Calu3 (cell line): ENCODE measurements at regions of chr2 and their contacts with region 1.

Region 1: GRCh38 chr2:84925724-84926376 is 20.4 kb downstream of the TMSB10 start:
- DNase-seq: peak; percentile 99
- H3K4me3 Mint-ChIP-seq: peak overlapping the region; percentile 63
- H3K27ac Mint-ChIP-seq: peak overlapping the region; percentile 30
- H3K4me1 Mint-ChIP-seq: peaks cover 36% of the 10 kb centered on the region
- H3K27me3 Mint-ChIP-seq: no peaks in the 10 kb centered on the region
- CTCF ChIP-seq: peak; percentile 93

Region 2: DNA sequence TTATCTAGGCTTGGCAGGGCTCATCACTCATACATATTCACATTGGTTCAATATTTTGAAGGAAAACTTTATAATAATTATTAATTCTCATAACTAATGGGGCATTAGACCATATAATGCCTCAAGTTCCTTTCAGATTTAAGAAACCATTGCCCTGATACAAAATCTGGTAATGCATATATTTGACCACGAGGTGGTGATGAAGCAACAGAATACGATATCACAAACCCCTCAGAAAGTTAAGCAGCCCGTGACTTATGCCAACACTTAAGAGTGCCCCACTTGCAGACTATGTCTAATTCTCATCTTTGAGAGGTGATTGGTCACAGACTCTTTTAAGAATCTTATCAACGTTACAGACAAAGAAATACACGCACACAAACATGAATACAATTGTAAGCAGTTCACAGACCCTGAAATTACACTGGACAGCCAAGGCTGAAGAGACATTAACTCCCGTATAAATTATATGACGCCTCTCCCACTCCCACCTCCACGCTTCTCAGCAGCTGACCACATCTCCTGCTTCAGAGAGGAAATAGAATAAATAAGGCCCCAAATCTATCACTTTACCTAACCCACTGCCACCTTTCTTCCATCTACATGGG is 430.2 kb before region 1 on chr2:
- CTCF ChIA-PET with region 1: interaction called, 3 read pairs
- intact Hi-C with region 1: loop called (anchors 5 kb)
- DNase-seq: peak; percentile 37
- H3K4me3 Mint-ChIP-seq: no peak overlapping the region
- H3K27ac Mint-ChIP-seq: no peak overlapping the region
- H3K4me1 Mint-ChIP-seq: peaks cover 13% of the 10 kb centered on the region
- H3K27me3 Mint-ChIP-seq: no peaks in the 10 kb centered on the region
- CTCF ChIP-seq: peak; percentile 65

Region 3: DNA sequence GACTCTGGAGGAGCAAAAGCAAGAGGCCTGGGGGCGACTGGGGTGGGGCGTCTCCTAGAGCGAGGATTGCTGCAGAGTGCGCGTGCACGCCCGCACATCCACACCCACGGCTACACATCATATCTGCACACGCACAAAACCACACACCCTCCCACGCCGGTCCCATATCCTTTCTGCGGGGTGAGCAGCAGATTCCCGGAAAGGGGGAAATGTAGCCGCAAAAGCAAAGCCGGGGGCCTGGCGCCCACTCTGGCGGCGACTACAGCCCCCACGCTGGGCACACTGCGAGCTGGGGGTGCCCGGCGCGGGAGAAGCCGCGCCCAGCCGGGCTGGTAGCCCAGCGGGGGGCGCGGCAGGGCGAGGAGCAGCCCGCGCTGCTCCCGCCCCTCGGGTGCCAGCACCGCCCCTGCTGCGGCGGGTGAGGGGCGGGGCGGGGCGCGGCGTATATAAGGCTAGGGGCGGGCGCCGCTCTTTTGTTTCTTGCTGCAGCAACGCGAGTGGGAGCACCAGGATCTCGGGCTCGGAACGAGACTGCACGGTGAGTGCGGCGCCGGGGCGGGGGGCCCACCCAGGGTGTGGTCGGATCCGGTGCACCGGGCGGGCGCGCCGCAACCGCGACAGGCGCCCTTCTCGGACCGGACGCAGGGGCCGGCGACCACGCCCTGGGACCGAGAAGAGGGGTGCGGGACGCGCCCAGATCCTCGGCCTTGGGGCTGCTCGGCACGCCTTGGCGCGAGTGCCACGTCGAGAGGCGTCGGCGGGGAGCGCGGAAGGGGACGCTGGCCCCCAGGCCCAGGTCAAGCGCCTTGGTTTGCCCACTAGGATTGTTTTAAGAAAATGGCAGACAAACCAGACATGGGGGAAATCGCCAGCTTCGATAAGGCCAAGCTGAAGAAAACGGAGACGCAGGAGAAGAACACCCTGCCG is 20.4 kb before region 1 on chr2 and contains the start of gene TMSB10:
- CTCF ChIA-PET with region 1: interaction called, 24 read pairs
- intact Hi-C with region 1: no loop called
- DNase-seq: peak; percentile 92
- H3K4me3 Mint-ChIP-seq: peak within 1 kb of the TSS; percentile 86
- H3K27ac Mint-ChIP-seq: peak within 1 kb of the TSS; percentile 98
- H3K4me1 Mint-ChIP-seq: peaks cover 31% of the 10 kb centered on the region
- H3K27me3 Mint-ChIP-seq: no peaks in the 10 kb centered on the region
- CTCF ChIP-seq: no peak
- total RNA-seq, gene TMSB10: 1,316 and 1,437 TPM in 2 replicates

Region 4: GRCh38 chr2:84958135-84959044 is 32.5 kb after region 1 on chr2:
- CTCF ChIA-PET with region 1: interaction called, 26 read pairs
- intact Hi-C with region 1: no loop called
- DNase-seq: peak; percentile 81
- H3K4me3 Mint-ChIP-seq: peak overlapping the region; percentile 55
- H3K27ac Mint-ChIP-seq: peak overlapping the region; percentile 95
- H3K4me1 Mint-ChIP-seq: peaks cover 40% of the 10 kb centered on the region
- H3K27me3 Mint-ChIP-seq: no peaks in the 10 kb centered on the region
- CTCF ChIP-seq: no peak

Region 5: GRCh38 chr2:84991404-84992151 is 65.7 kb after region 1 on chr2:
- CTCF ChIA-PET with region 1: no interaction called
- intact Hi-C with region 1: no loop called
- DNase-seq: no peak
- H3K4me3 Mint-ChIP-seq: no peak overlapping the region
- H3K27ac Mint-ChIP-seq: no peak overlapping the region
- H3K4me1 Mint-ChIP-seq: peaks cover 12% of the 10 kb centered on the region
- H3K27me3 Mint-ChIP-seq: no peaks in the 10 kb centered on the region
- CTCF ChIP-seq: no peak

Region 6: GRCh38 chr2:85017411-85018048 is 91.7 kb after region 1 on chr2:
- CTCF ChIA-PET with region 1: interaction called, 36 read pairs
- intact Hi-C with region 1: loop called (anchors 1 kb)
- DNase-seq: no peak
- H3K4me3 Mint-ChIP-seq: no peak overlapping the region
- H3K27ac Mint-ChIP-seq: peak overlapping the region; percentile 39
- H3K4me1 Mint-ChIP-seq: peaks cover 55% of the 10 kb centered on the region
- H3K27me3 Mint-ChIP-seq: no peaks in the 10 kb centered on the region
- CTCF ChIP-seq: no peak

Region 7: GRCh38 chr2:85702172-85702571 is 776.3 kb after region 1 on chr2:
- CTCF ChIA-PET with region 1: no interaction called
- intact Hi-C with region 1: no loop called
- DNase-seq: no peak
- H3K4me3 Mint-ChIP-seq: no peak overlapping the region
- H3K27ac Mint-ChIP-seq: peak overlapping the region; percentile 72
- H3K4me1 Mint-ChIP-seq: peaks cover 51% of the 10 kb centered on the region
- H3K27me3 Mint-ChIP-seq: peaks cover 10% of the 10 kb centered on the region
- CTCF ChIP-seq: no peak

Region 8: GRCh38 chr2:85873679-85874078 is 947.8 kb after region 1 on chr2:
- CTCF ChIA-PET with region 1: no interaction called
- intact Hi-C with region 1: no loop called
- DNase-seq: peak; percentile 10
- H3K4me3 Mint-ChIP-seq: no peak overlapping the region
- H3K27ac Mint-ChIP-seq: no peak overlapping the region
- H3K4me1 Mint-ChIP-seq: no peaks in the 10 kb centered on the region
- H3K27me3 Mint-ChIP-seq: peaks cover 74% of the 10 kb centered on the region
- CTCF ChIP-seq: no peak